Panc1 (cell line): ENCODE measurements at regions of chr10 and their contacts with region 1.

Region 1: GRCh38 chr10:30608386-30608785 is 21.2 kb downstream of the LYZL2 start:
- DNase-seq: no peak
- ATAC-seq: no peak
- H3K4me3 ChIP-seq: no peak overlapping the region
- H3K27ac ChIP-seq: no peak overlapping the region
- H3K4me1 ChIP-seq: no peaks in the 10 kb centered on the region
- H3K27me3 ChIP-seq: no peaks in the 10 kb centered on the region
- CTCF ChIP-seq: no peak

Region 2: GRCh38 chr10:30534465-30535144 is 73.8 kb before region 1 on chr10:
- CTCF ChIA-PET with region 1: no interaction called
- POLR2A ChIA-PET with region 1: no interaction called
- in situ Hi-C with region 1: no loop called
- intact Hi-C with region 1: no loop called
- DNase-seq: peak; percentile 18
- ATAC-seq: peak; percentile 68; the same call in 1 of the 2 replicates
- H3K4me3 ChIP-seq: no peak overlapping the region
- H3K27ac ChIP-seq: no peak overlapping the region
- H3K4me1 ChIP-seq: no peaks in the 10 kb centered on the region
- H3K27me3 ChIP-seq: no peaks in the 10 kb centered on the region
- CTCF ChIP-seq: peak; percentile 80

Region 3: DNA sequence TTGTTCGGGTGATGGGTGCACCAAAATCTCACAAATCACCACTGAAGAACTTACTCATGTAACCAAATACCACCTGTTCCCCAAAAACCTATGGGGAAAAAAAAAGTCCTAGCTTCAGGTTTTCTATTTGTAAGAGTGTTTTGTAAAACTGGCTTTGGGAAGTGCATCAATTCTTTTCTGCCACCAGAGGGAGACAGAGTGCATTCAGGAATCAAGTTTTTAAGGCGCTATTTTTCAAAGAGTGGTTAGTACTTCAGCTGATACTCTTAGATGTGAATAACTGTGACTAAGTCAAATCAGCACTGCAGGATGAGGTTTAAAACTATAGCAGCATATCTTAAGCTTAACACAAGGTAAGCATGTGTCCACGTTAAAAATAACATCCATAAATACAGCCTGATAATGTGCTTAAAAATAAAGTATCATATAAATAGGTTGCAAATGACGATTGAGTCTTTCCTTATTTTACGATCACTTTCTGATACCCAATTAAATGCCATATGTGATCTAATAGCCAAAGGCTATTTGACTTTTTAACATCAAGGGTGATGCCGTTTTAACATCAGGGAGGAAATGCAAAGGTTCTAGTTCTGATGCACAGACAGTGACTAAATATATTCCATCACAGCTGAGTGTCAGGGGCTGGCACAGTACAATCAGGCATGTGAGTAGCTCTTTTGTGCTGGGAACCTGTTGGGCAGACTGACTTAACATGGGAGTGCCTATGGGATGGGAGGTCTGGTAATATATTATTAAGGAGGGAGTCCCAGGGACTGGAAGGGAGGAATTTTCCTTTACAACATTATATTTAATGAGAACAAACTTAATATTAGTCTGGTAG is 31.8 kb after region 1 on chr10:
- CTCF ChIA-PET with region 1: interaction called, 11 read pairs
- POLR2A ChIA-PET with region 1: no interaction called
- in situ Hi-C with region 1: no loop called
- intact Hi-C with region 1: no loop called
- DNase-seq: peak; percentile 43
- ATAC-seq: no peak
- H3K4me3 ChIP-seq: no peak overlapping the region
- H3K27ac ChIP-seq: no peak overlapping the region
- H3K4me1 ChIP-seq: no peaks in the 10 kb centered on the region
- H3K27me3 ChIP-seq: no peaks in the 10 kb centered on the region
- CTCF ChIP-seq: peak; percentile 83